Ovary (tissue), 10 donors: ENCODE measurements at regions of chr19 and their contacts with region 1.

Region 1: GRCh38 chr19:49755956-49756355 is 7.2 kb downstream of the TSKS start:
- DNase-seq: no peak
- H3K4me3 ChIP-seq: no peak overlapping the region
- H3K27ac ChIP-seq: no peak overlapping the region
- H3K4me1 ChIP-seq: peaks cover 7% of the 10 kb centered on the region
- H3K27me3 ChIP-seq: no peaks in the 10 kb centered on the region
- CTCF ChIP-seq: no peak
- EP300 ChIP-seq: no peak
- POLR2A ChIP-seq: no peak

Region 2: GRCh38 chr19:49690656-49691242 is 65.2 kb before region 1 on chr19 and contains the start of gene CPT1C:
- intact Hi-C with region 1: loop called in 1 of 4 experiments (anchors 2 kb)
- DNase-seq: peak; percentile 81 to 89 (median 85)
- H3K4me3 ChIP-seq: peak within 1 kb of the TSS; percentile 39
- H3K27ac ChIP-seq: peak within 1 kb of the TSS; percentile 8 to 10
- H3K4me1 ChIP-seq: no peaks in the 10 kb centered on the region
- H3K27me3 ChIP-seq: no peaks in the 10 kb centered on the region
- CTCF ChIP-seq: no peak
- EP300 ChIP-seq: no peak
- POLR2A ChIP-seq: peak; percentile 55
- total RNA-seq, gene CPT1C: 4.6 to 25.8 (median 14.5) TPM